ENCODE measurements at regions of chr15 and their contacts with region 1.

Region 1: DNA sequence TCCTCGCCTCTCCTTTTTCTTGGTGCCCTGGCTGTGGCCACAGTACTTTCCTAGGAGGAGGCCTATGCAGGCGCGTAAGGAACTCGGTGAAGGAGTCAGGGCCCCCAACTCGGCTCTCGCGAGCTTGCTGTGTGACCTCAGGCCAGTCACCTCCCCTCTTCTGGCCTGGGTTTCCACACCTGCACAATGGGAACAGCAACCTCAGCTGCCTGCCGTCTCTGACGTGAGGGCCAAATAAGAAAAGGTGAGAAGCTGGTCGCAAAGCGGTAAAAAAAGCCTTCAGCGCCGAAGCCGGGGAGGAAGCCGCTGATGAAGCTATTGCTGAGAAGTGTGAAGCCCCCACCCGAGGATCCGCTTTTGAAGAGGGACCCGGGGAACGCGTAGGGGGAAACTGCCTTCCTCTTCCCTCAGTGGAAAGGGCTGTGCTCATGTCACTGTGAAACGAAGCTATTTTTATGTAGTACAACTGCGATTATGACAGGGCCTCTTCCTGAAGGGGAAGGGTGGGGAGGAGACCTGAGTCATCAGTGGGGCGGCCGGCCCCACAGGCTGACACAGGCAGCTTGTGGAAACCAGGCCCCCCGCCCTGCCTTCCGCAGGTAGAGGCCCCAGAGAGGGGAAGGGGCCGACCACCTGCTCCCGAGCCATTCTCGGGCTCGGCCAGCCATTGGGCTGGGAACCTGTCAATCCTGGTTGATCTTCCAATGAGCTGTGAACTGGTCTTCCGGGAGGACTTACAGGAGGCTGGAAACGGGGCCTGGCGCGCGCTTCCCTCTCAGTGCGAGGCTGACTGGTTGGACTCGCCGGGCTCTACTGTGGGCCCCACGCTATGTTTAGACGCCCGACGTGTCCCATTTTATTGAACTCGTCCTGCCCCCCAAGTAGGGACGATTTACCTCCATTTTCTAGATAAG is 18.0 kb upstream of the ANKDD1A start:
- DNase-seq: peak; percentile 97
- H3K4me3 ChIP-seq: peak overlapping the region in 3 of 4 donors; percentile 24 to 41 (median 40)
- H3K27ac ChIP-seq: peak overlapping the region; percentile 77 to 85 (median 80)
- H3K4me1 ChIP-seq: peaks cover 0 to 50% (median 39%) of the 10 kb centered on the region in 4 donors
- H3K27me3 ChIP-seq: no peaks in the 10 kb centered on the region
- CTCF ChIP-seq: no peak
- EP300 ChIP-seq: no peak
- POLR2A ChIP-seq: no peak

Region 2: DNA sequence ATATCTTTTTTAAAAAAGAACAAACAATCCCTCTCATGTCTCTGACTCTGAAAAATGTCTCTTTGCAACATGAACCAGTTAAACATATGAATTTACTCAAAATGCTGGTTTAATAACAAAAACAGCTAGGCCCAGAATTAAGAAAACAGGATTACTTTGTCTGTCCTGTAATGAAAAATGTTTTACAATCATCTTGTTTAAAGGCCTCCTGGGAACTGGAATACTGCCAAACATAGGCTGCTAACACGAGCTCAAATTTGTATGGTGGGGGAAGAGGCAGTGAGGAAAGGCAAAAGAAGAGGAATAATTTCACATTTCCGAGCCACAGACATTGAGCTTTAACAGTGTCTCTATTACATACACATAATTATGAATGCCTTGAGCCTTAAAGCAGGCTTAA is 669.2 kb before region 1 on chr15:
- intact Hi-C with region 1: no loop called
- DNase-seq: peak; percentile 71
- H3K4me3 ChIP-seq: no peak overlapping the region
- H3K27ac ChIP-seq: peak overlapping the region in 3 of 4 donors; percentile 19 to 36 (median 21)
- H3K4me1 ChIP-seq: peaks cover 0 to 24% (median 18%) of the 10 kb centered on the region in 4 donors
- H3K27me3 ChIP-seq: no peaks in the 10 kb centered on the region
- CTCF ChIP-seq: no peak
- EP300 ChIP-seq: no peak
- POLR2A ChIP-seq: no peak

Region 3: GRCh38 chr15:64699751-64700388 is 193.9 kb before region 1 on chr15:
- intact Hi-C with region 1: loop called (anchors 5 kb)
- DNase-seq: no peak
- H3K4me3 ChIP-seq: peak overlapping the region in 2 of 4 donors; percentile 5 to 13
- H3K27ac ChIP-seq: peak overlapping the region; percentile 72 to 95 (median 92)
- H3K4me1 ChIP-seq: peaks cover 0 to 89% (median 81%) of the 10 kb centered on the region in 4 donors
- H3K27me3 ChIP-seq: no peaks in the 10 kb centered on the region
- CTCF ChIP-seq: no peak
- EP300 ChIP-seq: no peak
- POLR2A ChIP-seq: no peak

Region 4: DNA sequence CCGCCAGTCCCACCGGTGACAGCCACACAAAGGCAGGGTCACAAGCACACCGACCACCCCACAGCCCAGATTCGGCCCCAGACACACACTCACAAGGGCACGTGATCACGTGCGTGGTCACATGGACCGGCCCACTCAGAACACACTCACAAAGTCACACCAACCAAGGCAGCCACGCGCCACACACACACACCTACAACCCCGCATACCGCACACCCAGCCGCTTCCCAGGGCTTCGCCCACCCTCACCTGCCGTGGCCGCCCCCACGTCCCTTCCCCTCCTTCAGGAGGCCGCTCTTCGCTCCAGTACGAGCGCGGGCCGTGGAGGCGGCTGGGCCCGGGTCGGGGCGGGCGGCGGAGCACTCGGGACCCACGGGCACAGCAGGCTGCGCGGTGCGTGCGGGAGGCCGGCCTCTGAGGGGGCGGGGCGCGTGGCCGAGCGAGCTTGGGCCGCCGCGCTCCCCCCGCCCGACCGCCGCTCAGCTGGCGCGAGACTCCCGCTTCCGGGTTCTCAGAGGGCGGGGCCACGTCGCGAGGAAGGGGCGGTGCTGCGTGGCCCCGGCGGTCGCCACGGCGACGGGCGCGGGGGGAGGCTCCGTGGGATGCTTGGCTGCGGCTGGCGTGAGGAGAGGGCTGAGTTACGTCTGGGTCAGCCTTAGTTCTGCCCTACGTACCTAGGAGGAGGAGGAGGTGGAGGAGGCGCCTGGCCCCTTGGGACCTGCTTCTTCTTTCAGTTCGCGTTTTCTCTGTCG is 95.9 kb after region 1 on chr15 and contains the start of gene SPG21:
- intact Hi-C with region 1: no loop called
- DNase-seq: peak; percentile 96
- H3K4me3 ChIP-seq: peak within 1 kb of the TSS; percentile 74 to 100 (median 81)
- H3K27ac ChIP-seq: peak within 1 kb of the TSS; percentile 92 to 99 (median 96)
- H3K4me1 ChIP-seq: peaks cover 0 to 35% (median 27%) of the 10 kb centered on the region in 4 donors
- H3K27me3 ChIP-seq: no peaks in the 10 kb centered on the region
- CTCF ChIP-seq: no peak
- EP300 ChIP-seq: no peak
- POLR2A ChIP-seq: peak in 1 of 2 donors; percentile 54
- total RNA-seq, gene SPG21: 95.7 to 116 (median 103) TPM